ENCODE measurements at regions of chr2 and their contacts with region 1.

Region 1: DNA sequence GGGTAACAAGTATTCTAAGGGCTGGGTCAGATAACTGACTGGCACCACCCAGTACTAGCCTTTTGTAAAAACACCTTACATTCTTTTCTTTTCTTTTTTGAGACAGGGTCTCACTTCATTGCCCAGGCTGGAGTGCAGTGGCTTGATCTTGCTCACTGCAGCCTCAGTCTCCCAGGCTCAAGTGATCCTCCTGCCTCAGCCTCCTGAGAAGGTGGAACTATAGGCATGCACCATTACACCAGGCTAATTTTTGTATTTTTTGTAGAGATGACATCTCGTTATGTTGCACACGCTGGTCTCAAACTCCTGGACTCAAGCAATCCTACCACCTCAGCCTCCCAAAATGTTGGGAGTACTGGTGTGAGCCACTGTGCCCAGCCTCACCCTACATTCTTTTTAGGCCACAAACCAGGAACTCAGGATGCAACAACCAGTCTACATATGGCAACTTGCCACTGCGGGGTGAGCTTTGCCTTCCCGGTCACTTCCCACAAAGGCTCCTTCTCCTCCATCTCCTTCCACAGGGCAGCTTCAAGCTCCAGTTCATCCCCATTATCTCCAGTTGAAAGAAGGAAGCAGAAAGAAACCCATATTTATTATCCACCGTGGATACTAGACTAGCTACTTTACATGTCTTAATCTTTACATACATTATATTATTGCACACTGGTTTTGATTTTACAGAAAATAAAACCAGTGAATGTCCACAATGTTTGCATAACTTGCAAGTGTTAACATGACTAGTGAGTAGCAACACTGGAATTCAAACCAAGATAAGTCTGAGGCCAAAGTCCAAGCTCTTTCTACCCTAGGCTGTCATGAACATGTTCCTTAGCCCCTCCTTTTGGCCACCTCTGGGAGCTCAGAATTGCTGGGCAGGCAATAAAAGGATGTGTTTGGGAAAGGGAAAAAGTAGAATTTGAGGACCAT is 23.7 kb upstream of the AP1S3 start:
- DNase-seq: peak; percentile 90
- H3K4me3 Mint-ChIP-seq: peak overlapping the region; percentile 61
- H3K27ac Mint-ChIP-seq: peak overlapping the region; percentile 96
- H3K4me1 Mint-ChIP-seq: peaks cover 69% of the 10 kb centered on the region
- H3K27me3 Mint-ChIP-seq: no peaks in the 10 kb centered on the region
- CTCF ChIP-seq: no peak

Region 2: GRCh38 chr2:223697892-223698645 is 163.0 kb before region 1 on chr2:
- CTCF ChIA-PET with region 1: interaction called, 5 read pairs
- intact Hi-C with region 1: loop called (anchors 2 kb)
- DNase-seq: peak; percentile 50
- H3K4me3 Mint-ChIP-seq: peak overlapping the region; percentile 34
- H3K27ac Mint-ChIP-seq: peak overlapping the region; percentile 97
- H3K4me1 Mint-ChIP-seq: peaks cover 72% of the 10 kb centered on the region
- H3K27me3 Mint-ChIP-seq: no peaks in the 10 kb centered on the region
- CTCF ChIP-seq: peak; percentile 27

Region 3: GRCh38 chr2:223779877-223780276 is 81.2 kb before region 1 on chr2:
- CTCF ChIA-PET with region 1: interaction called, 5 read pairs
- intact Hi-C with region 1: loop called (anchors 1 kb)
- DNase-seq: peak; percentile 64
- H3K4me3 Mint-ChIP-seq: no peak overlapping the region
- H3K27ac Mint-ChIP-seq: no peak overlapping the region
- H3K4me1 Mint-ChIP-seq: peaks cover 27% of the 10 kb centered on the region
- H3K27me3 Mint-ChIP-seq: no peaks in the 10 kb centered on the region
- CTCF ChIP-seq: peak; percentile 34

Region 4: DNA sequence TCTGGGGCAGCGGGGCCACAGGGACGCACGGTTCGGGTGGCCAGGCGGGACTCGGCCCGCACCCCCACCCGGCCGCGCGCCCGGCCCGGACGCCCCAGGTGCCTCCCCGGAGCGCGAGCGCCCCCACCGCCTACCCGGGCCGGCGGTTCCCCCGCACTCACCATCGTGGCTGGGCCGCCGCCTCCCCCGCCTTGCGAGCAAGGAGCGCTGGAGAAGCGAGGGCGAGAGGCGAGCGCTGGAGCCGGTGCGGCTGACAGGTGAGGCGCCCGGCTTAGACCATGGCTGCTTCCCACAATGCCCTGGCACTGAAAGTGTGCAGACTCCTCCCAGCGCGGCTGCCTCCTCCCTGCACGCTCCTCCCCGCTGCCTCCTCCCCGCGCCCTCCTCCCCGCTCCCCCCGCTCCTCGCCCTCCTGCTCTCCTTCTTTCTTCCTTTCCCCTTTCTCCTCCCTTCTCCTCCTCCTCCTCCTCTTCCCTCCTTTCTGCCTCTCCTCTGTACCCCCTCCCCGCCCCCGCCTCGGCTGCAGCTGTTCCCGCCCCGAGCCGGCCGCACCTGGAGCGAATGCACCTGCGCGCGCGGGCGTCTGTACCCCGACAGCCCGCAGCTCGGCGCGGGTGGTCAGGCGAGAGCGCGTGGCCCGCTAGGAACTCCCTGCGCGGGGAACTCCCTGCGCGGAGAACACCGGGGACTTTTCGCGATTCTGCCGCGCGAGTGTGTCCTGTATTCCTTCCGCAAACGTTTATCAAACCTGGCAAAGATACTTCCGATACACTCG is 23.6 kb before region 1 on chr2 and contains the start of gene AP1S3:
- CTCF ChIA-PET with region 1: interaction called, 11 read pairs
- intact Hi-C with region 1: loop called (anchors 2 kb)
- DNase-seq: peak; percentile 91
- H3K4me3 Mint-ChIP-seq: peak within 1 kb of the TSS; percentile 88
- H3K27ac Mint-ChIP-seq: peak within 1 kb of the TSS; percentile 89
- H3K4me1 Mint-ChIP-seq: peaks cover 34% of the 10 kb centered on the region
- H3K27me3 Mint-ChIP-seq: no peaks in the 10 kb centered on the region
- CTCF ChIP-seq: no peak
- total RNA-seq, gene AP1S3: 108 and 119 TPM in 2 replicates

Measured in Calu3 (cell line).